ENCODE measurements at regions of chr19 and their contacts with region 1.

Region 1: DNA sequence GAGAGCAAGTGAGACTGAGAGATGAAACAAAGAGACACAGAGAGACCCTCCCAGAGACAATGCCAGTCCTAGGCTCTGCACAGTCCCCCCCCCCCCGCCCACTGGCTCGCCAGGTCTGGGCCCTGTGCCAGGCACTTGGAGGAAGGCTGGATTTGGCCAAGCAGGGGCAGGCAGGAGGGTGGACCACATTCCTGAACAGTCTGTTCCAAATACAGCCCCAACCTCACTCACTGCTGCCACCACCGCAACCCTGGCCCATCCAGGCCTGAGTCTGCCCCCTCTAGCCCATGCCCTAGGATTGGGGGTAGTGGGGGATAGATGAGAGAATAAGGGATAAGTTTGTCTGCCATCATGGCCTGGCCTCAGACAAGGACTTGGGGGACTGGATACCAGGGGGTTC is 19.0 kb downstream of the CYP2F1 start:
- DNase-seq: no peak
- ATAC-seq: no peak

Region 2: GRCh38 chr19:40806488-40807468 is 326.5 kb before region 1 on chr19:
- intact Hi-C with region 1: loop called (anchors 10 kb)
- DNase-seq: peak; percentile 88
- ATAC-seq: peak; percentile 21